ENCODE measurements at regions of chr6 and their contacts with region 1.

Region 1: DNA sequence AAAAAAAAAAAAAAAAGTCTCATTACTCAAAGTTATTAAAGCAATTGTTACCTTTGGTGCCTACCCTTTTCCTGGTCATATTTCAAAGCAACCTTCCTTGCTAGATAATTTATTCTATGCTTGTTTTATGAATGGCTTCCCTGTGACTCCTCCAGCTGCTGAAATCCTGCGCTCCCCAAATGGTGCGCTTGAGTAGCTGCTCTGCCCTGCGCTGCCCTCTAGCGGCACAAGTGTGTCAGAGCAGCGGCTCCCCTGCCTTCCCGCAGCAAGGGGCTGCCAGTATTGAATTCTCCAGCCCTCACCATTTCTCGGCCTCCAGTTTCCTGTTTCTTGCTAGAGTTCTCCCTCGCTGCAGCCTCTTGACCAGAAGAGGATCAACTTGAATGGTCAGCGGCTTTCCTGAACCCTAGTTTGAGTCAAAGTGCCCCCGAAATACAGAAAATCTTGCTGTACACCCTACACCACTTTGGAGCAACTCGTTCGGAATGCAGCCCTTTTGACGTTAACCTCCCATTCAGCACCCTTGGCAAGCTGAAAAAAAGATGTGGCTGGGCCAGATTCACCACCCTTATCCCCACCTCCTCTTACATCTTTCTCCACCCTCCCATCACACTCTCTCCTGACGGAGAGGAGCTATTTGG is 60.4 kb upstream of the KLHL31 start:
- DNase-seq: peak; percentile 78 to 88
- ATAC-seq: peak; percentile 89 to 97 (median 94)
- H3K4me3 ChIP-seq: no peak overlapping the region
- H3K27ac ChIP-seq: no peak overlapping the region
- H3K4me1 ChIP-seq: no peaks in the 10 kb centered on the region
- H3K27me3 ChIP-seq: no peaks in the 10 kb centered on the region
- CTCF ChIP-seq: peak; percentile 97

Region 2: DNA sequence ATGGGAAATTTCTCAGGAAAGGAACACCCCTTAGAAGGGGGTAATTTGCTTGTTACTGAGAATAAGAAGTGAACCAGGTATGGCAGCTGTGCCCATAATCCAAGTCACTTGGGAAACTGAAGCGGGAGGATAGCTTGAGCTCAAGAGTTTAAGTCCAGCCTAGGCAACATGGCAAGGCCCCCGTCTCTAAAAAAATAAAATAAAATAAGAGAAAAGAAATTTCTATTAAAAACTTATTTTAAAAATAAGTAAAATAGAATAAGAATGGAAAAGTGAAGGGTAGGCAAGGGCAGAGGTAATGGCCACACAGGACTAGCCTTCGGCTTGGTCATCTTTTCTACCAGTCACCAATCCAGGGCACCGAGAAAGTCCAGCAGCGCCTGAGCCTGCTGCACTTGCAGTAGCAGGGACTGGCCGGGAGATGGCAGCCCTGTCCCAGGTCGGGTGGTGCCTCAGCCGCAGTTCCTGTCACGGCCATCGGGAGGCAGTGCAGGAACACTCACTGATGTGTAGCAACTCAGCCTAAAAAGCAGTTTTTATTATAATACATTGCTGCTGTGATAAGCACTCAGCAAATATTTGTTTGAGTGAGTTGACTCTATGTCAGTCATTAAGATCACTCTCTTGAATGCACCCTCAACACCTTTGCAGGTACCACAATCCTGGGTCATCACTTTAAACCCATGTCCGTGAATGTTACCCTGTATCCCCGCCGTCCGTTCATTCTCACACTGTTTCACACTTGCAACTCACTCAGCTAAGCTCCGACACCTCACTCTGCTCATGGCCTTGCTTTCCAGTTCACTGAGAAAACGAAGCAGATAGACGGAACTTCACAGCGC is 554.1 kb before region 1 on chr6:
- intact Hi-C with region 1: loop called (anchors 5 to 10 kb)
- DNase-seq: peak; percentile 86 to 92
- ATAC-seq: peak; percentile 96 to 100 (median 99)
- H3K4me3 ChIP-seq: no peak overlapping the region
- H3K27ac ChIP-seq: no peak overlapping the region
- H3K4me1 ChIP-seq: no peaks in the 10 kb centered on the region
- H3K27me3 ChIP-seq: no peaks in the 10 kb centered on the region
- CTCF ChIP-seq: peak; percentile 100

Region 3: GRCh38 chr6:53369876-53370515 is 355.9 kb before region 1 on chr6:
- intact Hi-C with region 1: loop called in 1 of 2 experiments (anchors 5 kb)
- DNase-seq: no peak
- ATAC-seq: no peak
- H3K4me3 ChIP-seq: no peak overlapping the region
- H3K27ac ChIP-seq: no peak overlapping the region
- H3K4me1 ChIP-seq: no peaks in the 10 kb centered on the region
- H3K27me3 ChIP-seq: no peaks in the 10 kb centered on the region
- CTCF ChIP-seq: no peak

Region 4: DNA sequence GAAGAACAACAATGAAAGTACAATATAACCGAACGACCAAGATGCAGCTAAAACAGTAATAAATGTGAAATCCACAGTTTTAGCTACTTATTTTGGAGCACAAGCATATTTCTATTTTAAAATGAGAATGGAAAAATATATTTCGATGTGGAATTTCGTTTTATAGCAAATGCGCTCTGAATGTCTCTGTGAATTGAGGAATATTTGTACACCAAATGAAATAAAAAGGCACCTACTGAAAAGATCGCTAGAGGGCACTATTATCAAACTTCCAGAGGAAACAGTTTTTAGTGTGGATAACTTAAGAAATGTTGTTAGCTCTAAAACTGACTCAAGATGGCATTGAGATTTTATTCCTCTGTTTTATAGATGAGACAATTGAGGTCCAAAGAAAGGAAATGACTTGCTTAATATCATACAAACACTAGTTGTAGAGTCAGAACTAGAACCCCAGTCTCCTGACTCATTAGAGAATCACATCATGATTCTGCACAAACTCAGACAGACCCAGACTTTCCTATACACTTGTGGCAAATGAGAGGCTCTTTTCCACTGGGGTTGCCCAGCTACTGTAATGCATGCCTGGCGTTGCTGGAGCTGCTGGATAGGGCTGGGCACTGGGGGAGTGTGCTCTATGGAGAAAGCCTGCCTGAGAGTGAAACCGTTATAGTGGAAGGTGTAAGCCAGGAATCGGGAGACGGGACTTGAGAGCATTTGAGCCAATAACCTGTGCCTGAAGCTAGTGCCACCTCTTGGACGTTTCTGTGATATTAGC is 232.9 kb before region 1 on chr6:
- intact Hi-C with region 1: loop called (anchors 1 to 2 kb)
- DNase-seq: no peak
- ATAC-seq: peak; percentile 59 to 89 (median 72)
- H3K4me3 ChIP-seq: peak overlapping the region; percentile 59
- H3K27ac ChIP-seq: peak overlapping the region; percentile 54
- H3K4me1 ChIP-seq: peaks cover 11% of the 10 kb centered on the region
- H3K27me3 ChIP-seq: no peaks in the 10 kb centered on the region
- CTCF ChIP-seq: peak; percentile 75

Region 5: DNA sequence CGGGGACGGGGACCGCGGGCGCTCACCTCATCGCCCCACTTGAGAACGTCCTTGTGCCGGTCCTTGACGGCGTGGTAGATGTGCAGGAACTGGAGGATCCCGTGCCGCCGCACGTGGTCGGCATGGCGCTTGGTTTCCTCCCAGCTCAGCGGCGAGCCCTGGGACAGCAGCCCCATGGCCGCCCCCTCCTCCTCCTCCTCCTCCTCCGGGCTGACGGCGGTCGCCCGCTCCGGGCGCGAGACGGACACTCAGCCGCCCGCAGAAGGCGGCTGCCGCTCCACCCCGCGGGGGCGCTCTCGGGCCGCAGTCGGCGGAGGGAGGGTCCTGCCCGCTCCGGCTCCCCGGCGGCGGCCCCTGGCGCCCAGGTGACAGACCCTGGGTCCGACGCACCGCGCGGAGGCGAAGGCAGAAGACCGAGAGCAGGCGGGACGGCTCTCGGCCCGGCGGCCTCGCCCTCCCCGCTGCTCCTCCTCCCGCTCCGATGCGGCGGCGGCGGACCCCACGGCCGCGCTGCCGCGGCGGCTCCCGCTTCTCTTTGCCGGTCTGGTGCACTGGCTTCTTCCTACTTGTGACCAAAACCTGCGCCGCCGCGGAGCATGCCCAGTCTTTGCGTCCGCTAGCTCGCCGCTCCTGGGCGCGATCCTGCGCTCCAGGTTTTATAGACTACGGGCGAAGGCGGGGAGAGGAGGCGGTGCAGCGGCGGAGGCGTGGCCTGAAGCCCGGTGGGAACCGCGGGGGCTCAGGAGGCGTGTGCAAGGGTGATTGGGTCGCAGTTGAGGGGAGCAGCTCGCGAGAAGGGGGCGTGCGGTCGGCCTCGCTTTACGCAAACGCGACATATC is 181.2 kb before region 1 on chr6 and contains the start of gene GCLC:
- intact Hi-C with region 1: loop called (anchors 5 kb)
- DNase-seq: peak; percentile 95 to 97
- ATAC-seq: peak; percentile 79 to 82 (median 80)
- H3K4me3 ChIP-seq: peak within 1 kb of the TSS; percentile 75
- H3K27ac ChIP-seq: peak within 1 kb of the TSS; percentile 96
- H3K4me1 ChIP-seq: peaks cover 40% of the 10 kb centered on the region
- H3K27me3 ChIP-seq: no peaks in the 10 kb centered on the region
- CTCF ChIP-seq: peak; percentile 71
- total RNA-seq, gene GCLC: 14.0 to 31.9 (median 22.8) TPM

Region 6: GRCh38 chr6:53651764-53652401 is 74.0 kb before region 1 on chr6:
- intact Hi-C with region 1: loop called (anchors 2 to 5 kb)
- DNase-seq: peak; percentile 73 to 86
- ATAC-seq: peak; percentile 87 to 92 (median 90)
- H3K4me3 ChIP-seq: peak overlapping the region; percentile 67
- H3K27ac ChIP-seq: peak overlapping the region; percentile 79
- H3K4me1 ChIP-seq: peaks cover 66% of the 10 kb centered on the region
- H3K27me3 ChIP-seq: no peaks in the 10 kb centered on the region
- CTCF ChIP-seq: peak; percentile 29